ENCODE measurements at regions of chr5 and their contacts with region 1.

Region 1: GRCh38 chr5:217860-218456 is at the starts of genes CCDC127 and SDHA:
- DNase-seq: peak; percentile 99
- ATAC-seq: peak; percentile 85
- H3K4me3 ChIP-seq: peak within 1 kb of the TSS; percentile 67 to 93 (median 90)
- H3K4me3 Mint-ChIP-seq: peak within 1 kb of the TSS; percentile 96
- H3K27ac ChIP-seq: peak within 1 kb of the TSS; percentile 68 to 83
- H3K27ac Mint-ChIP-seq: peak within 1 kb of the TSS; percentile 94
- H3K4me1 ChIP-seq: peaks cover 6 to 23% of the 10 kb centered on the region in 2 donors
- H3K4me1 Mint-ChIP-seq: peaks cover 62% of the 10 kb centered on the region
- H3K27me3 ChIP-seq: no peaks in the 10 kb centered on the region
- H3K27me3 Mint-ChIP-seq: no peaks in the 10 kb centered on the region
- CTCF ChIP-seq: peak; percentile 20
- total RNA-seq, gene CCDC127: 7.8 and 8.7 TPM in 2 replicates
- total RNA-seq, gene SDHA: 137 and 143 TPM in 2 replicates

Region 2: GRCh38 chr5:270340-270739 is 52.4 kb after region 1 on chr5:
- CTCF ChIA-PET with region 1: interaction called, 3 read pairs
- POLR2A ChIA-PET with region 1: interaction called, 10 read pairs
- intact Hi-C with region 1: loop called (anchors 1 kb)
- DNase-seq: no peak
- ATAC-seq: no peak
- H3K4me3 ChIP-seq: no peak overlapping the region
- H3K4me3 Mint-ChIP-seq: peak overlapping the region; percentile 92
- H3K27ac ChIP-seq: no peak overlapping the region
- H3K27ac Mint-ChIP-seq: peak overlapping the region; percentile 67
- H3K4me1 ChIP-seq: peaks cover 0 to 14% of the 10 kb centered on the region in 2 donors
- H3K4me1 Mint-ChIP-seq: peaks cover 24% of the 10 kb centered on the region
- H3K27me3 ChIP-seq: no peaks in the 10 kb centered on the region
- H3K27me3 Mint-ChIP-seq: no peaks in the 10 kb centered on the region
- CTCF ChIP-seq: no peak

Region 3: GRCh38 chr5:2187687-2188086 is 1969.7 kb after region 1 on chr5:
- CTCF ChIA-PET with region 1: no interaction called
- POLR2A ChIA-PET with region 1: no interaction called
- intact Hi-C with region 1: no loop called
- DNase-seq: no peak
- ATAC-seq: no peak
- H3K4me3 ChIP-seq: no peak overlapping the region
- H3K4me3 Mint-ChIP-seq: no peak overlapping the region
- H3K27ac ChIP-seq: no peak overlapping the region
- H3K27ac Mint-ChIP-seq: no peak overlapping the region
- H3K4me1 ChIP-seq: no peaks in the 10 kb centered on the region
- H3K4me1 Mint-ChIP-seq: no peaks in the 10 kb centered on the region
- H3K27me3 ChIP-seq: no peaks in the 10 kb centered on the region
- H3K27me3 Mint-ChIP-seq: no peaks in the 10 kb centered on the region
- CTCF ChIP-seq: no peak